Transverse colon (tissue), 4 donors: ENCODE measurements at regions of chr18 and their contacts with region 1.

Region 1: GRCh38 chr18:8478166-8478967 is 130.9 kb upstream of the RAB12 start:
- DNase-seq: peak; percentile 57
- H3K4me3 ChIP-seq: no peak overlapping the region
- H3K27ac ChIP-seq: no peak overlapping the region
- H3K4me1 ChIP-seq: no peaks in the 10 kb centered on the region
- H3K27me3 ChIP-seq: no peaks in the 10 kb centered on the region
- CTCF ChIP-seq: peak; percentile 59 to 81 (median 75)
- EP300 ChIP-seq: no peak
- POLR2A ChIP-seq: no peak

Region 2: DNA sequence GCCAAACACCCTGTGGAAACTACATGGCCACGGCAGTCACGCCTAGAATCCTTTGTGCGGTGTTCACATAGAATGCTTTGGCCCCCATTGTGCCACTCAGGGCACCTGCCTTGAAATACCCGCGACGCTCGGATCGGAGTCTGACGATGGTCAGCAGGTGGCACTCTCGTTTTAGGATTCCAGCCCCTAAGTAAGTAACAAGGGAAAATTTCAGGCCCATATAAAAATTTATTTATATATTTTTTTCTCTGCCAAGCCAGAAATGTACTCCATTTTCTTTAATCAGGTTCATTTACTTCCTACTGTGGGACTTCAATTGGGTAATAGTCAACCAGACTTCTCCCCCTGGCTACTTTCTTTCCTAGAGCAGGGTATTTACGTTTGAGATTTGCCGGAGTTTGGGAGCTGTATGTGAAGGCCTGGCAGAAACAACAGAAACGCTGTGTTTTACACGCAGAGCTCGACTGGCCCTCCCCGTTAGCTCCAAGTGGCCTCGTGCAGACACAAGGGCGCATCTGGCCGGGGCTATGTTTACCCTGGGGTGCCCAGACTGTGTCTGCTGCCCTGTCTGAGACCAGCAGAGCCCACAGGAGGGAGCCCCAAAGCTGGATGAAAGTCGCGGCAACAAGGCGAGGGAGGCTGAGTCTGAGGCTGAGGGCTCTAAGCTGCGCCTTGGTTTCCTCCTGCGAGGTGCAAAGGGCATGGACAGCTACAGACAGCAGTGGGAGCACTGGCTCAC is 1205.9 kb before region 1 on chr18:
- in situ Hi-C with region 1: loop called in 1 of 4 experiments (anchors 25 kb)
- intact Hi-C with region 1: loop called (anchors 10 kb)
- DNase-seq: peak; percentile 37
- H3K4me3 ChIP-seq: no peak overlapping the region
- H3K27ac ChIP-seq: peak overlapping the region; percentile 57 to 83 (median 66)
- H3K4me1 ChIP-seq: peaks cover 0 to 9% (median 0%) of the 10 kb centered on the region in 4 donors
- H3K27me3 ChIP-seq: no peaks in the 10 kb centered on the region
- CTCF ChIP-seq: peak in 3 of 5 experiments; percentile 24 to 49 (median 33)
- EP300 ChIP-seq: no peak
- POLR2A ChIP-seq: no peak

Region 3: GRCh38 chr18:8595445-8595844 is 117.1 kb after region 1 on chr18:
- in situ Hi-C with region 1: no loop called
- intact Hi-C with region 1: no loop called
- DNase-seq: no peak
- H3K4me3 ChIP-seq: no peak overlapping the region
- H3K27ac ChIP-seq: no peak overlapping the region
- H3K4me1 ChIP-seq: no peaks in the 10 kb centered on the region
- H3K27me3 ChIP-seq: no peaks in the 10 kb centered on the region
- CTCF ChIP-seq: no peak
- EP300 ChIP-seq: no peak
- POLR2A ChIP-seq: no peak